ENCODE measurements at regions of chr17 and their contacts with region 1.

Region 1: GRCh38 chr17:48908047-48908843 is at the start of gene UBE2Z:
- DNase-seq: peak; percentile 97
- total RNA-seq, gene UBE2Z: 46.1 TPM

Region 2: DNA sequence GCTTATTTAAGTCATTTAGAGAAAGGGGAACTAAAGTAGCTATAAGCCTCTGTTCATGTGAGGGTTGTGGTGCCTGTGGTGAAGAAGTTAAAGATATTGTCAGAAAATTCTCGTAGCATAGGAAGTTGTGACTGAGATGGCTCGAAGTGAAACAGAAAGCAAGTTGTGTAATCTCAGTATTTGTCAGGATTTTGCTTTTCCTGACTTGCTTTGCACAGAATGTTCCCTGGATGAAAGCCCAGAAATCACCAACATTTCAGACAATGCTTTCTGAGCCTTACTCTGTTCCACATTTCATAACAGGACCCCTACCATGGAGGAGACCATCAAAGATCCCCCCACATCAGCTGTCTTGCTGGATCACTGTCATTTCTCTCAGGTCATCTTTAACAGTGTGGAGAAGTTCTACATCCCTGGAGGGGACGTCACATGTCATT is 66.8 kb before region 1 on chr17:
- intact Hi-C with region 1: no loop called
- DNase-seq: no peak

Region 3: GRCh38 chr17:48892940-48893645 is 15.2 kb before region 1 on chr17:
- intact Hi-C with region 1: loop called (anchors 1 kb)
- DNase-seq: no peak

Region 4: GRCh38 chr17:48944519-48945260 is 36.4 kb after region 1 on chr17 and contains the start of gene SNF8:
- intact Hi-C with region 1: loop called (anchors 5 kb)
- DNase-seq: peak; percentile 95
- total RNA-seq, gene SNF8: 76.1 TPM

Measured in cardiac septum (tissue), 1 donor.